ENCODE measurements at regions of chr16 and their contacts with region 1.

Region 1: GRCh38 chr16:66608241-66609138 is 4.0 kb downstream of the CMTM3 start:
- DNase-seq: peak; percentile 86
- H3K4me3 Mint-ChIP-seq: no peak overlapping the region
- H3K27ac Mint-ChIP-seq: no peak overlapping the region
- H3K4me1 Mint-ChIP-seq: peaks cover 14% of the 10 kb centered on the region
- H3K27me3 Mint-ChIP-seq: no peaks in the 10 kb centered on the region
- CTCF ChIP-seq: peak; percentile 78

Region 2: GRCh38 chr16:66483689-66484481 is 124.6 kb before region 1 on chr16:
- CTCF ChIA-PET with region 1: interaction called, 6 read pairs
- POLR2A ChIA-PET with region 1: no interaction called
- intact Hi-C with region 1: loop called (anchors 5 kb)
- DNase-seq: peak; percentile 73
- H3K4me3 Mint-ChIP-seq: no peak overlapping the region
- H3K27ac Mint-ChIP-seq: no peak overlapping the region
- H3K4me1 Mint-ChIP-seq: peaks cover 33% of the 10 kb centered on the region
- H3K27me3 Mint-ChIP-seq: no peaks in the 10 kb centered on the region
- CTCF ChIP-seq: peak; percentile 96

Region 3: DNA sequence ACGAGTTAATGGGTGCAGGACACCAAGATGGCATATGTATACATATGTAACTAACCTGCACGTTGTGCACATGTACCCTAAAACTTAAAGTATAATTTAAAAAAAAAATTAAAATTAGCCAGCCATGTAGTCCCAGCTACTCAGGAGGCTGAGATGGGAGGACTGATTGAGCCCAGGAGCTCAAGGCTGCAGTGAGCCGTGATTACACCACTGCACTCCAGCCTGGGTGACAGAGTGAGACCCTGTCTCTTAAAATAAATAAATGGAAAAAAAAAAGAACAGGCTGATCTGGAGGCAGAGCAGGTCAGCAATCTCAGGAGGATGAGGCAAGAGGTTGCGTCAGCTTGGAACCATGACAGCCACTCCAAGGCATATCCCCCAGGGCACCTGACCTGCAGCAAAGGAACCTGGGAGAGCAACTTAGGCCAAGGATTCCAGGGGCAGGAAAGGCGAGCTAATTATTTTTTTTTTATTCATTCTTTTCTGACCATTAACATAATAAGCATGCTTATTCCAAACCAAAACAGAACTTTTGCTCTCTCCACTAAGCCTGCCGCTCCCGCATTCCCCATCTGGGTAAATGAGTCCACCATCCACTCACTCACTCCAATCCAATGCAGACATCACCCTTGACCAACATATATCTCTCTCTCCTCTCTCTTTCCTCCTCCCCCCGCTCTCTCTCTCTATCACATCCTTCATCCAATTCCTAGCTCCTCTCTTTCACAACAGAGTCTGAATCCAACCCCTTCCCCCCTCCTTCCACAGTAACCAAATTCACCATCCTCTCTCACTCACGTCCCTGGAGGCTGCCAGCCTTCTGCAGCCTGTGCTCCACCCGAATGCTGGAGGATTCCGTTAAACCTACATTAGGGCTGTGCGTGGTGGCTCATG is 106.2 kb before region 1 on chr16:
- CTCF ChIA-PET with region 1: no interaction called
- POLR2A ChIA-PET with region 1: no interaction called
- intact Hi-C with region 1: no loop called
- DNase-seq: peak; percentile 85
- H3K4me3 Mint-ChIP-seq: no peak overlapping the region
- H3K27ac Mint-ChIP-seq: peak overlapping the region; percentile 31
- H3K4me1 Mint-ChIP-seq: peaks cover 39% of the 10 kb centered on the region
- H3K27me3 Mint-ChIP-seq: no peaks in the 10 kb centered on the region
- CTCF ChIP-seq: no peak

Region 4: GRCh38 chr16:66580605-66581209 is 27.8 kb before region 1 on chr16:
- CTCF ChIA-PET with region 1: interaction called, 19 read pairs
- POLR2A ChIA-PET with region 1: no interaction called
- intact Hi-C with region 1: no loop called
- DNase-seq: peak; percentile 85
- H3K4me3 Mint-ChIP-seq: no peak overlapping the region
- H3K27ac Mint-ChIP-seq: peak overlapping the region; percentile 32
- H3K4me1 Mint-ChIP-seq: peaks cover 22% of the 10 kb centered on the region
- H3K27me3 Mint-ChIP-seq: no peaks in the 10 kb centered on the region
- CTCF ChIP-seq: no peak

Region 5: GRCh38 chr16:66639091-66639885 is 30.8 kb after region 1 on chr16:
- CTCF ChIA-PET with region 1: interaction called, 16 read pairs
- POLR2A ChIA-PET with region 1: interaction called, 3 read pairs
- intact Hi-C with region 1: no loop called
- DNase-seq: peak; percentile 38
- H3K4me3 Mint-ChIP-seq: peak overlapping the region; percentile 56
- H3K27ac Mint-ChIP-seq: peak overlapping the region; percentile 98
- H3K4me1 Mint-ChIP-seq: peaks cover 18% of the 10 kb centered on the region
- H3K27me3 Mint-ChIP-seq: no peaks in the 10 kb centered on the region
- CTCF ChIP-seq: no peak

Region 6: DNA sequence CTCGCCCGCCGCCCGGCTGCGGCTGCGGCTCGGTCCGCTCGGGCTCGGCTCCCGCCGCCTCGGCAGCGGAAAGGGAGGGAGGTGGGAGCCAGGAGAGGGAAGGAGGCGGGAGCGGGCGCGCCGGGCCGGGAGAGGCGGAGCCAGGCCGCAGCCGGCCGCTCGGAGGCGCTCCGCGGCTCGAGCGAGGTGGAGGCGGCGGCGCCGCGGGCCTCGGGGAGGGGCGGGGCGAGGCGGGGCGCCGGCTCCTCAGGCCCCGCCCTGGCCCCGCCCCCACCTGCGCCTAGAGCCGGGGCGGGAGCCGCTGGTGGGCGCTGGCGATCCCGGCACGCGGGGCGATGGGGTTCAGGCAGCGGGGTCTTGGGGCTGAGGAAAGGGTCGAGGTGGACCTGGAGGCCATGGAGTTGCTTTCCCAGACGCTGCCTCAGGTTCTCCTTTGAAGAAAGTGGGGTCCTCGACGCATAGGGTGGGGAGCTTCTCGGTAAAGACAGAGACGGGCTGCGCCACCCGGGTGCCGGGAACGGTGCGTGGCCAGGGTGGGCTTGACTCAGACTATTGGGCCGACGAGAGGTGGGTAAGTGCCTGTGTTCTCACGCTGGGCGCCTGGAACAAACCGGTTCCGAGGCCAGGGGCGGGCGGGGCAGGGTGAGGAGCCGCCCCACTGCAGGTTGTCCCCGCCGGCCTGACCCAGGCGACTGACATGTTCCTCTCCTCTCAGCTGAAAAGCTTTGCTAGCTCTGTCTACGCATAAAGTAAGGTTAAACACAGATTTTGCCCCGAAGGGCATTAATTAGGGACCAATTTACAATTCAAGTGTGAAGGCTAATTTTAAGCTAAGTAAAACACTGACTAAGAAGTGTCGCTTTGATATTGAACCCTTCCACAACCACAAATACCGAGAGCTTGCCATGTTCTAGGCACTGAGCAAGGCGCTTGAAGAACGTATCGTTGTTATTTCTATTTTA is 88.5 kb after region 1 on chr16 and contains the start of gene CMTM4:
- CTCF ChIA-PET with region 1: interaction called, 11 read pairs
- POLR2A ChIA-PET with region 1: interaction called, 4 read pairs
- intact Hi-C with region 1: loop called (anchors 1 kb)
- DNase-seq: peak; percentile 89
- H3K4me3 Mint-ChIP-seq: peak within 1 kb of the TSS; percentile 79
- H3K27ac Mint-ChIP-seq: peak within 1 kb of the TSS; percentile 69
- H3K4me1 Mint-ChIP-seq: peaks cover 14% of the 10 kb centered on the region
- H3K27me3 Mint-ChIP-seq: no peaks in the 10 kb centered on the region
- CTCF ChIP-seq: peak; percentile 12
- total RNA-seq, gene CMTM4: 27.2 and 36.7 TPM in 2 replicates

Region 7: GRCh38 chr16:66872943-66873684 is 264.6 kb after region 1 on chr16:
- CTCF ChIA-PET with region 1: interaction called, 24 read pairs
- POLR2A ChIA-PET with region 1: no interaction called
- intact Hi-C with region 1: no loop called
- DNase-seq: peak; percentile 97
- H3K4me3 Mint-ChIP-seq: peak overlapping the region; percentile 71
- H3K27ac Mint-ChIP-seq: peak overlapping the region; percentile 51
- H3K4me1 Mint-ChIP-seq: peaks cover 14% of the 10 kb centered on the region
- H3K27me3 Mint-ChIP-seq: no peaks in the 10 kb centered on the region
- CTCF ChIP-seq: peak; percentile 90